CD4-positive, alpha-beta T cell (primary cell): ENCODE measurements at regions of chr11 and their contacts with region 1.

Region 1: GRCh38 chr11:124673333-124674167 is at the starts of genes SIAE and SPA17:
- DNase-seq: peak; percentile 70 to 95 (median 80)
- ATAC-seq: peak; percentile 66
- H3K4me3 ChIP-seq: peak within 1 kb of the TSS; percentile 85
- H3K4me3 Mint-ChIP-seq: peak within 1 kb of the TSS; percentile 91
- H3K27ac ChIP-seq: peak within 1 kb of the TSS; percentile 71 to 80
- H3K27ac Mint-ChIP-seq: no peak within 1 kb of the TSS
- H3K4me1 ChIP-seq: peaks cover 32% of the 10 kb centered on the region
- H3K4me1 Mint-ChIP-seq: peaks cover 42% of the 10 kb centered on the region
- H3K27me3 ChIP-seq: no peaks in the 10 kb centered on the region
- H3K27me3 Mint-ChIP-seq: no peaks in the 10 kb centered on the region
- CTCF ChIP-seq: no peak
- total RNA-seq, gene SIAE: 4.5 to 5.6 TPM
- total RNA-seq, gene SPA17: 0.16 TPM in 1 of 2 experiments, not detected in the other

Region 2: DNA sequence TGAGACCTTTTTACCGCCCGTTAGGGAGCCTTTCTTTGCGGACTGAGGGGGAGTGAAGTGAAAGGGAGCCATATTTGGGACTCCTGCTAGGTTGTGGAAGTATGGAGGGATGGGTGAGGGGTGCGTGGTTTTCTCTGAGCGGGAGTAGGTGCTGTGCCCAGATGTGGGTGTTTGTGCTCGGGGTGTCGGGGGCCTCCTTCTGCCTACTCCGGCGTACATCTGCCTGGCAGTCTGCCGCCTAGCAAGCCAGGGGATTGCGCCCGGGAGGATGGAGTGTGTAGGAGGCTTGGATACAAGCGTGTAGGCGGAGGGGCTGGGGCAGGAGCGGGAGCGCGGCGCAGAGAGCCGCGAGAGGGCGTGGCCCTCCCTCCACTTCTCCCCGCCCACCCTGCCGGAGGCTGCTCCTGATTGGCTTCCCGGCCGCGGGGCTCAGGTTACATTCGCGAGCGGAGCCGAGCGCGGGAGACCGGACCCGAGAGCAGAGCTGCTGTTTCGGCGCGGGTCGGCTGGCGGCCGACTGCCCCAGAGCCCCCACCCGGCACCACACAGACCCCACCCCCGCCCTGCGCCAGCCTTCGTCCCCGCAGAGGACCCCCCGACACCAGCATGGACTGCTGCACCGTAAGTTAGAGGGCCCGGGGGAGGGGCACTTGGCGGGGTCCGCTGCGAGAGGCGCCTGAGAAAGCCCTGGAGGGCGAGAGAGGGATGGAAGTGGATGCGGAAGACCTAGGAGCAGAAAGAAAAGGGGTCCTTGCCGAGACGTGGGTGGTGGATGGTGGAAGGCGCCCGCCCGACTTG is 66.1 kb after region 1 on chr11 and contains the start of gene NRGN:
- CTCF ChIA-PET with region 1: interaction called, 9 read pairs
- POLR2A ChIA-PET with region 1: interaction called, 8 read pairs
- intact Hi-C with region 1: loop called in 1 of 2 experiments (anchors 2 kb)
- DNase-seq: peak; percentile 68 to 90 (median 80)
- ATAC-seq: peak; percentile 92
- H3K4me3 ChIP-seq: peak within 1 kb of the TSS; percentile 64
- H3K4me3 Mint-ChIP-seq: peak within 1 kb of the TSS; percentile 83
- H3K27ac ChIP-seq: no peak within 1 kb of the TSS
- H3K27ac Mint-ChIP-seq: no peak within 1 kb of the TSS
- H3K4me1 ChIP-seq: peaks cover 16% of the 10 kb centered on the region
- H3K4me1 Mint-ChIP-seq: peaks cover 21% of the 10 kb centered on the region
- H3K27me3 ChIP-seq: peaks cover 0 to 6% of the 10 kb centered on the region in 2 experiments
- H3K27me3 Mint-ChIP-seq: peaks cover 7% of the 10 kb centered on the region
- CTCF ChIP-seq: no peak
- total RNA-seq, gene NRGN: 0.84 to 1.4 TPM

Region 3: DNA sequence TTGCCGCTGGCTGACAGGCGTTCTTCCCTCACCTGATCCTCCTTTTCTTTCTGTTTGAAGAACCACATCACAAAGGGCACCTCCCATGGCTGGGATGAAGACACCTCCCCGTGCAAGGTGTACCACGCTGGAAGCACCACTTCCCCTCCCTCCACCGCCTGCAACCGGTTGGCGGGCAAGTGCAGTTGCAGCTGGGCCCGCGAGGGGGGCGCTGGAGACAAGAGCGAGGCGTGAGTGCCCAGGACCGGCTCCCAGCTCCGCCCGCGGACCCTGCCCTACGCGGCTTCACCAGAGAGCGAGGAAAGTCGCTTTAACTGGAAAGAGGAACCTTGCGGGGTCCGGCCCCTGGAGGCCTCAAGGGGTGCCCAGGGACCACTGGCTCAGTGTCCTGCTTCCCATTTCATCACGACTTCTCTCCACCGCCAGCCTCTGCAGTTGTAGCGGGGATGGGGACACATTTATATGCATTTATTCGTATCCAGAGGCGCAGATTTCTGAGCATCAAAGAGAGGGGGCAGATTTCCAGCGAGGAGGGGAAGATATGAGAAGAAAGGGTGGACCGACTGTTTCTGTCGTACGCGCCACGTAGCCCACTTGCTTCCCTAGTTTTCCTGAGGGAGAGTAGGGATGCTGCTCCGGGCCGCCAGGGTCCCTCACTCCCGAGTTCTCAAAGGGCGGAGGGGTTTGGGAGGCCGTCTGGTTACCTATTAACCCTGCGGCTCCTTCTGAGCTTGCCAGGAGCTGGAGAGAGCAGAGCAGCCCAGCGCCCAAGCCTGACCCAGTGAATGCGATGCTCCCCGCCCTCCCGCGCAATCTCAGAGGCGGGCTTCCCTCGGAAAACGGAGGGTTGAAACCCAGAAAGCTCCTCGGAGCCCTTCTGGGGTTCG is 85.0 kb after region 1 on chr11:
- CTCF ChIA-PET with region 1: interaction called, 45 read pairs
- POLR2A ChIA-PET with region 1: interaction called, 22 read pairs
- intact Hi-C with region 1: loop called (anchors 1 kb)
- DNase-seq: peak; percentile 41 to 84 (median 62)
- ATAC-seq: peak; percentile 80
- H3K4me3 ChIP-seq: peak overlapping the region; percentile 13
- H3K4me3 Mint-ChIP-seq: peak overlapping the region; percentile 59
- H3K27ac ChIP-seq: no peak overlapping the region
- H3K27ac Mint-ChIP-seq: no peak overlapping the region
- H3K4me1 ChIP-seq: peaks cover 53% of the 10 kb centered on the region
- H3K4me1 Mint-ChIP-seq: peaks cover 36% of the 10 kb centered on the region
- H3K27me3 ChIP-seq: peaks cover 55 to 60% of the 10 kb centered on the region in 2 experiments
- H3K27me3 Mint-ChIP-seq: peaks cover 76% of the 10 kb centered on the region
- CTCF ChIP-seq: peak; percentile 78

Region 4: GRCh38 chr11:124800226-124800929 is 126.8 kb after region 1 on chr11 and contains the start of gene MSANTD2:
- CTCF ChIA-PET with region 1: interaction called, 12 read pairs
- POLR2A ChIA-PET with region 1: interaction called, 23 read pairs
- intact Hi-C with region 1: loop called in 1 of 2 experiments (anchors 10 kb)
- DNase-seq: peak; percentile 53 to 89 (median 71)
- ATAC-seq: peak; percentile 79
- H3K4me3 ChIP-seq: peak within 1 kb of the TSS; percentile 85
- H3K4me3 Mint-ChIP-seq: peak within 1 kb of the TSS; percentile 98
- H3K27ac ChIP-seq: peak within 1 kb of the TSS; percentile 94 to 96
- H3K27ac Mint-ChIP-seq: peak within 1 kb of the TSS; percentile 95
- H3K4me1 ChIP-seq: peaks cover 20% of the 10 kb centered on the region
- H3K4me1 Mint-ChIP-seq: peaks cover 25% of the 10 kb centered on the region
- H3K27me3 ChIP-seq: no peaks in the 10 kb centered on the region
- H3K27me3 Mint-ChIP-seq: no peaks in the 10 kb centered on the region
- CTCF ChIP-seq: no peak
- total RNA-seq, gene MSANTD2: 4.2 to 5.1 TPM

Region 5: DNA sequence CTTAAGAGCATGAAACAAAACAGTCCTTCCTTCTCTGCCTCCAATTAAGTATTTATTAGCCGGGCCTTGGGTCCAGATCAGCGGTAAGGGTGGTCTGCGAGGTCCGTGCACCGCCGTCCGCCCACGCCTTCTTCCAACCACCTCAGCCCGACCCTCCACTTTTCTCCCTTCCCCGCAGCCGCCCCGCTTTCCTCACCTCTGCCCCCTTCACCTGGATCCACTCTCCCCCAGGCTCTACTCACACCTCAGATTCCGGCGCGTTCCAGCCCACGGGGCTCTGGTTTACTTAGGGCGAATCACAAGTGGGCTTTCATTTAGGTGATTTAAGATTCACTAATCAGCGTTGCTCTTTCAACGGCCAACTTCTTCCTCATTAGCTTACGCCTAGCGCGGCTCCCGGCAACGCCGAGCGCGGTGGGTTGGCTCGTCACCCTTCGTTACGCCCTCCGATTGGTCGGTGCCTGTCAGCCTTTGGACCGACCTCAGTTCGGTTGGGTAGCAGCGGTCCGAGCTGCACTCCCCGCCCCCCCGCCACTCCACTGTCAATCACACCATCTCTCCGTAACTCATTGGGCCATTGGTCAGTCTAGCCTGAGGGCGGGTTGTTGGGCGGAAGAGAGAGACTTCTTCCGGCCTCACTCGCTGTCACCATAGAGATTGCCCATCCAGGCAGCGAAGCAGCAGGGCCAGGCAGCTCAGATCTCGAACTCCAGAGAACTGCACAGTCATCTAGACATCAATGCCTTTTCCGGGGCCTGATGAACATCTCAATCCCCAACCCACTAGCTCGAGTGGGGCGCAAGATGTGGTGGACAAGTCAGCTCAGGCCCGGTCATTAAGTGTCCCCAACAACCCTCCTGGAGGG is 438.0 kb after region 1 on chr11 and contains the start of gene TMEM218:
- CTCF ChIA-PET with region 1: no interaction called
- POLR2A ChIA-PET with region 1: interaction called, 3 read pairs
- intact Hi-C with region 1: loop called in 1 of 2 experiments (anchors 5 kb)
- DNase-seq: peak; percentile 89 to 99 (median 92)
- ATAC-seq: peak; percentile 94
- H3K4me3 ChIP-seq: peak within 1 kb of the TSS; percentile 90
- H3K4me3 Mint-ChIP-seq: peak within 1 kb of the TSS; percentile 97
- H3K27ac ChIP-seq: peak within 1 kb of the TSS; percentile 29 to 77
- H3K27ac Mint-ChIP-seq: peak within 1 kb of the TSS; percentile 84
- H3K4me1 ChIP-seq: peaks cover 16% of the 10 kb centered on the region
- H3K4me1 Mint-ChIP-seq: peaks cover 26% of the 10 kb centered on the region
- H3K27me3 ChIP-seq: no peaks in the 10 kb centered on the region
- H3K27me3 Mint-ChIP-seq: no peaks in the 10 kb centered on the region
- CTCF ChIP-seq: no peak
- total RNA-seq, gene TMEM218: 3.9 to 4.4 TPM